Activated CD4-positive, alpha-beta memory T cell treated with anti-CD3 and anti-CD28 coated beads, Interleukin-2, amount 10 ng/mL, durations not matched to agents 7 days and 5 days (primary cell): ENCODE measurements at regions of chr7 and their contacts with region 1.

Region 1: GRCh38 chr7:1159891-1160668 is at the start of gene ZFAND2A:
- DNase-seq: peak; percentile 99
- H3K4me3 Mint-ChIP-seq: peak within 1 kb of the TSS; percentile 84
- H3K27ac Mint-ChIP-seq: peak within 1 kb of the TSS; percentile 85
- H3K4me1 Mint-ChIP-seq: peaks cover 37% of the 10 kb centered on the region
- H3K27me3 Mint-ChIP-seq: no peaks in the 10 kb centered on the region
- total RNA-seq, gene ZFAND2A: 29.4 to 34.6 TPM

Region 2: GRCh38 chr7:1112109-1112508 is 48.0 kb before region 1 on chr7:
- CTCF ChIA-PET with region 1: no interaction called
- POLR2A ChIA-PET with region 1: no interaction called
- DNase-seq: no peak
- H3K4me3 Mint-ChIP-seq: no peak overlapping the region
- H3K27ac Mint-ChIP-seq: no peak overlapping the region
- H3K4me1 Mint-ChIP-seq: no peaks in the 10 kb centered on the region
- H3K27me3 Mint-ChIP-seq: no peaks in the 10 kb centered on the region

Region 3: DNA sequence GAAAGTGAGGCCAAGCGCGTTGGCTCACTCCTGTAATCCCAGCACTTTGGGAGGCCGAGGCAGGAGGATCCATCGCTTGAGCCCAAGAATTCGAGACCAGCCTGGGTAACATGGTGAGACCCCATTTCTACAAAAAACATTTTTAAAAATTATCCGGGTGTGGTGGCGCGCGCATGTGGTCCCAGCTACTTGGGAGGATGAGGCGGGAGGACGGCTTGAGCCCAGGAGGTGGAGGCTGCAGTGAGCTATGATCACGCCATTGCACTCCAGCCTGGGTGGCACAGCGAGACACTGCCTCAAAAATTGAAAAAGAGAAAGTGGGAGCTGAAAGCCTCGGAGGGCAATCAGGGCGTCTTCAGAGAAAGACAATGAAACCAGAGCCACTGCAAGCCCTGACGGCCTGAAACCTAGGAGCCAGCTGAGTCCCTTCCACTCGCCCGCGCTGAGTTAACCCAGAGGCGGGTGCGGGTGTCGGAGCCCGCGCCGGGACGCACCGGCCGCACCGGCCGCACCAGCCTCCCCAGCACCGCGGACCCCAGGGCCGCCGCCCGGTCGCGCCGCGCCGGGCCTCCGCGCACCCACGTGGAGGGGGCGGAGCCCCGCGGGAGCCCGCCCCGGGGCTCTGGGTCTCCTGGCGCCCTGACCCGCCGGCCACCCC is 22.4 kb before region 1 on chr7:
- CTCF ChIA-PET with region 1: interaction called, 4 read pairs
- POLR2A ChIA-PET with region 1: interaction called, 37 read pairs
- DNase-seq: no peak
- H3K4me3 Mint-ChIP-seq: peak overlapping the region; percentile 85
- H3K27ac Mint-ChIP-seq: peak overlapping the region; percentile 65
- H3K4me1 Mint-ChIP-seq: peaks cover 22% of the 10 kb centered on the region
- H3K27me3 Mint-ChIP-seq: no peaks in the 10 kb centered on the region

Region 4: DNA sequence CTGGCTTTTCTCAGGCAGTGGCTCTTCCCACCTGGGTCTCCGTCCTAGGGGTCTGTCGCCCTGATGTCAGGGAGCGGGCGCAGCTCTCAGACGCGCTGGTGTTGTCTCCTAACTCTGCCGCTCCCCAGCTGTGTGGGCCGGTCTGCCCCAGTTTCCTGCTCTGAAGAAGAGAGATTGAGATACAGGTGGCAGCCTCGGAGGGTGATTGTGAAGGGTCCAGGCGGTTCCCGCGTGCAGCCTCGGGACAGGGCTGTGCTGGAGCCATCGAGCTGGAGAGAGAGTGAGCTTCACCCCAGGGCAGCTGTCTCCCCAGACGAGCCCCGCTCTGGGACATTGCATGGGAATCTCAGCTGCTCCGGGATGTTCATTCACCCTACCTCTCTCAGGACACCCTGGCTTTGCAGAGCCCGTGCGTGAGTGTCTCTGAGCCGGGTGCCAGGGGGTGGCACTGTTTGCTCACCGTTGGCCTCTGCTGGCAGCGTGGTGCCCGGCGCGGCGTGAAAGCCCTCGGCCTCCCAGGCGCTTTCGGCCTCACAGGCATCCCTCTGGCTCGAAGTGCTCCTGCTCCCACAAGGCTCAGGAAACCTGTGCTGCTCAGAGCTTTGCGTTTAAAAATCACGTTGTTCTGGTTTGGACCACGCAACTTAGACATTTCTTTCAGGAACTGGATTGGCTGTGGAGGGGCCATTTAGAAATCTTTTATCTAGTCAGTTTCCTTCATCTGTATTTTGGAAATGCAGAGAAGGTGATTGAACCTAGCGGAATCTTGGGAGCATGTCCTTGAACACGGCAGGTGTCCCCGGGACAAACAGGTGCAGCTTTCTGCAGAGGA is 33.7 kb after region 1 on chr7:
- CTCF ChIA-PET with region 1: interaction called, 4 read pairs
- POLR2A ChIA-PET with region 1: interaction called, 10 read pairs
- DNase-seq: peak; percentile 70
- H3K4me3 Mint-ChIP-seq: no peak overlapping the region
- H3K27ac Mint-ChIP-seq: peak overlapping the region; percentile 38
- H3K4me1 Mint-ChIP-seq: peaks cover 30% of the 10 kb centered on the region
- H3K27me3 Mint-ChIP-seq: peaks cover 11% of the 10 kb centered on the region

Region 5: GRCh38 chr7:1210321-1210978 is 50.4 kb after region 1 on chr7:
- CTCF ChIA-PET with region 1: no interaction called
- POLR2A ChIA-PET with region 1: no interaction called
- DNase-seq: no peak
- H3K4me3 Mint-ChIP-seq: no peak overlapping the region
- H3K27ac Mint-ChIP-seq: no peak overlapping the region
- H3K4me1 Mint-ChIP-seq: no peaks in the 10 kb centered on the region
- H3K27me3 Mint-ChIP-seq: peaks cover 30% of the 10 kb centered on the region